Left ventricle myocardium superior (tissue), 1 donor: ENCODE measurements at regions of chr20 and their contacts with region 1.

Region 1: DNA sequence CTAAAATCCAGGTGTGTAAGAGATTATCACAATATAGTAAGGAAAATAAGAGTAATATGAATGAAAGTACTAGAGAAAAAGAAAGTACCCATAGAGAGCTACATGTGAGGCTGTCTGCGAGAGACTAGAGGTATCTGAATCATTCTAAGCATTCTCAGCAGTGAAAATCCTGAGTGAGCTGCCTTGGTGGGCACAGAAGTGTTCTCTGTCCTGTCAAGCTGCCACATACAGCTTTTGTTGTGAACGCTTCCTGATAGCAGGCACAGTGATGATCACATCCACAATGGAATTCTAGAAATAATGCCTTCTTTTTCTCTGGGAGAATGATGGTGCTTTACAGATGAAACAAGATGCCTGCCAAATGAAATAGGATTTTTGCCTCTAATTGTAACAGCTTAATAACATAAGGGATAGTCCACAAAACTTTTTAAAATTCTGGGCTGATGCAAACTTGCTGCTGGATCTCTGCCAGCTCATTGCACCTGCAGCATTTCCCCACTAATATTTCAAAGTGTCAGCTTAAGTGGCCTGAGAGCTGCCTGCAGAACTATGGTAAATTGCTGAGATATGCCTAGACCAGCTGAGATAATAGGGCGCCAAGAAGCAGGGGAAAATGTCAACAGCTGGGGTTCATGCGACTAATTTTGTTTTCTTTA is 620.5 kb downstream of the DOK5 start:
- DNase-seq: no peak
- ATAC-seq: no peak

Region 2: DNA sequence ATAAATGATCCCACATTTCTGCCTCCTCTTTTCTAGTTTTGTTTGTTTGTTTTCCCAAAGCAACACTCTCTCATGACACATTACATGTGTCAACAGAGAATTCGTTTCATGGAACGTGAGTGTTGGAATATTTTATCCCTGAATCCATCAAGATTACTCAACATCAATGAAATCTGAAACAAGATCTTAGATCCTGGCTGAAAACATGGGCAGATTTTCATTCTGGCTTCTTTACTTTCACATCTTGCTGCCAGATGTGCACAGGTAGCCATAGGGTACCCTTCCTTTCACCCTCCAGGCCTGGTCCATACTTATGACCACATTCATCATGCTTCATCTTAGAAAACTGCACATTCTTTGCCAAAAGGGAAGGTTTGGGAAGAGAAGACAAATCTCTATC is 273.5 kb before region 1 on chr20:
- intact Hi-C with region 1: no loop called
- DNase-seq: no peak
- ATAC-seq: no peak

Region 3: DNA sequence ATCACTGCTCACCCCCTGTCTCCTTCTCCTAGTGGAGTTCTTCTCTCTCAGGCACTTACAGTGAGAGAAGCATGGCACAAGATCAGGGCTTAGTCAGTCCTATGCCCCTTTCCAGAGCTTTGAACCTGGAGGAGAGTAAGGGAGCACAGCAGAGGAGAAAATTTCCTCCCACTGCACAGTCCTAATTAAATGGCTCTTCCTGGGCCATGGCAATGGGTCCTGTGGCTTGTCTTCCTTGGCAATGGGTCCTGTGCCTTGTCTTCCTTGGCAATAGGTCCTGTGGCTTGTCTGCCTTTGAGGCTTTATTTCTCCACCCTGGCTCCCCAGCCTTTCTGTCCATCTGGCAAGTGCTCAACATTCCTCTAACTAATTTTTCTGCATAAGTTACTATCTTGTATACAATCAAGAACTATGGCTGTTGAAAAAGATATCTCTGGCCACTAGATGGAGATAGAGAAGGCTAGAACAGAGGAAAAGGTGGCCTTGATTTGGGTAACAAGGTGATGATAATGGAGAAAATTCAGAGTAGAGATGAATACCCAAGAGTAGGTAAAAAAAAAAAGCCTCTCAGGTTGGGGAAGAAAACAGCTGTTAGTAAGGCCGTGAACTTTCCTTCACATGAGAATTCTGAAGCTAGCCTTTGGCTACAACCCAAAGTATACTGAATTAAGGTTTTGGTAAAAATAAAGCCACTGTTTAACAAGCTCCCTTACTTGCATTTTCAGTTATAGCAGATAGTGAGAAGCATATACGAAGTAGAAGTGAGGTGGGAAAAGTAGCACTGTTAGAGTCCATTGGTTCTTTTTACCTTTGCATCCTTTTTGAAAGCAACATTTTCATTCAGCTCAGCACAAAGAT is 115.5 kb before region 1 on chr20:
- intact Hi-C with region 1: no loop called
- DNase-seq: no peak
- ATAC-seq: no peak

Region 4: GRCh38 chr20:55990003-55990402 is 894.1 kb after region 1 on chr20:
- intact Hi-C with region 1: loop called (anchors 10 kb)
- DNase-seq: no peak
- ATAC-seq: no peak